ENCODE measurements at regions of chr11 and their contacts with region 1.

Region 1: GRCh38 chr11:62383822-62384221 is 35.0 kb upstream of the SCGB1A1 start:
- DNase-seq: no peak
- ATAC-seq: no peak
- H3K4me3 ChIP-seq: no peak overlapping the region
- H3K4me3 Mint-ChIP-seq: no peak overlapping the region
- H3K27ac ChIP-seq: no peak overlapping the region
- H3K27ac Mint-ChIP-seq: no peak overlapping the region
- H3K4me1 ChIP-seq: peaks cover 0 to 6% of the 10 kb centered on the region in 2 donors
- H3K4me1 Mint-ChIP-seq: peaks cover 0 to 28% (median 4%) of the 10 kb centered on the region in 7 donors
- H3K27me3 ChIP-seq: no peaks in the 10 kb centered on the region
- H3K27me3 Mint-ChIP-seq: peaks cover 0 to 15% (median 0%) of the 10 kb centered on the region in 5 donors

Region 2: GRCh38 chr11:62169091-62169847 is 214.6 kb before region 1 on chr11:
- CTCF ChIA-PET with region 1: no interaction called
- POLR2A ChIA-PET with region 1: no interaction called
- intact Hi-C with region 1: loop called in 1 of 2 experiments (anchors 1 kb)
- DNase-seq: no peak
- ATAC-seq: no peak
- H3K4me3 ChIP-seq: no peak overlapping the region
- H3K4me3 Mint-ChIP-seq: no peak overlapping the region
- H3K27ac ChIP-seq: no peak overlapping the region
- H3K27ac Mint-ChIP-seq: no peak overlapping the region
- H3K4me1 ChIP-seq: peaks cover 0 to 4% of the 10 kb centered on the region in 2 donors
- H3K4me1 Mint-ChIP-seq: peaks cover 0 to 5% (median 5%) of the 10 kb centered on the region in 7 donors
- H3K27me3 ChIP-seq: no peaks in the 10 kb centered on the region
- H3K27me3 Mint-ChIP-seq: peaks cover 30 to 40% (median 34%) of the 10 kb centered on the region in 5 donors

Region 3: DNA sequence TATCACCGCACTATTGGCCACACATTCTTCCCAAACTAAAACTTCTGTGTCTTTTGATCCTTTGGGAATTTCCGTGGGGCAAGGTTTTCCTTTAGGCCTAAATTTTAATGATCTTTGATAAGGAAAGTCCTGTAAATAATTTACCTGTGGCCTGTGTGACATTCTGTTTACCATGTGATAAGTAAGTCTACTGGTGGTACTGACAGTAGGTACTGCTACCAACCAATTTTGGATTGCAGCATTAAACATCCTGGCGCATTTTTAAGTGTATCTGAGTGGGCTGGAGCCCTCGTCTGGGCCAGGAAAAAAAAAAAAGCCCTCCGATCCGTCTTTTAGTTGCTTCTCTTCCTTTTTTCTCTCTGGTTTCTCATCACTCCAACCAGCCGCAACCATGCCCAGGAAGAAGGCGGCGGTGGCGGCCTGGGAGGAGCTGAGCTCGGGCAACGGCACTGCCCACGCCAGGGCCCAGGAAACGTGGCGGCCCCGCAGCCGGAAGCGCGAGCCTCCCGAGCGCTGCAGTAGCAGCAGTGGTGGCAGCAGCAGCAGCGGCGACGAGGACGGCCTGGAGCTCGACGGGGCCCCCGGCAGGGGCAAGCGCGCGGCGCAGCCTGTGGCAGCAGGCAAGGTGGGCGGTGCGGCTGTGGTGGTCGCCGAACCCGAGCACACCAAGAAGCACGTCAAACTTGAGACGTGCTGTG is 12.9 kb before region 1 on chr11:
- CTCF ChIA-PET with region 1: interaction called, 3 read pairs
- POLR2A ChIA-PET with region 1: no interaction called
- intact Hi-C with region 1: loop called in 1 of 2 experiments (anchors 2 kb)
- DNase-seq: peak in 8 of 9 donors; percentile 14 to 59 (median 38)
- ATAC-seq: peak; percentile 87
- H3K4me3 ChIP-seq: no peak overlapping the region
- H3K4me3 Mint-ChIP-seq: peak overlapping the region in 9 of 10 donors; percentile 64 to 82 (median 77)
- H3K27ac ChIP-seq: peak overlapping the region; percentile 54
- H3K27ac Mint-ChIP-seq: peak overlapping the region; percentile 14 to 89 (median 86)
- H3K4me1 ChIP-seq: no peaks in the 10 kb centered on the region
- H3K4me1 Mint-ChIP-seq: peaks cover 0 to 24% (median 6%) of the 10 kb centered on the region in 7 donors
- H3K27me3 ChIP-seq: no peaks in the 10 kb centered on the region
- H3K27me3 Mint-ChIP-seq: no peaks in the 10 kb centered on the region

Region 4: GRCh38 chr11:62394825-62395538 is 11.2 kb after region 1 on chr11:
- CTCF ChIA-PET with region 1: interaction called, 12 read pairs
- POLR2A ChIA-PET with region 1: no interaction called
- intact Hi-C with region 1: loop called (anchors 1 kb)
- DNase-seq: peak in 7 of 9 donors; percentile 37 to 66 (median 54)
- ATAC-seq: peak; percentile 85
- H3K4me3 ChIP-seq: no peak overlapping the region
- H3K4me3 Mint-ChIP-seq: no peak overlapping the region
- H3K27ac ChIP-seq: no peak overlapping the region
- H3K27ac Mint-ChIP-seq: peak overlapping the region in 3 of 9 donors; percentile 23 to 74 (median 65)
- H3K4me1 ChIP-seq: peaks cover 0 to 13% of the 10 kb centered on the region in 2 donors
- H3K4me1 Mint-ChIP-seq: peaks cover 11 to 34% (median 22%) of the 10 kb centered on the region in 7 donors
- H3K27me3 ChIP-seq: no peaks in the 10 kb centered on the region
- H3K27me3 Mint-ChIP-seq: no peaks in the 10 kb centered on the region

Region 5: DNA sequence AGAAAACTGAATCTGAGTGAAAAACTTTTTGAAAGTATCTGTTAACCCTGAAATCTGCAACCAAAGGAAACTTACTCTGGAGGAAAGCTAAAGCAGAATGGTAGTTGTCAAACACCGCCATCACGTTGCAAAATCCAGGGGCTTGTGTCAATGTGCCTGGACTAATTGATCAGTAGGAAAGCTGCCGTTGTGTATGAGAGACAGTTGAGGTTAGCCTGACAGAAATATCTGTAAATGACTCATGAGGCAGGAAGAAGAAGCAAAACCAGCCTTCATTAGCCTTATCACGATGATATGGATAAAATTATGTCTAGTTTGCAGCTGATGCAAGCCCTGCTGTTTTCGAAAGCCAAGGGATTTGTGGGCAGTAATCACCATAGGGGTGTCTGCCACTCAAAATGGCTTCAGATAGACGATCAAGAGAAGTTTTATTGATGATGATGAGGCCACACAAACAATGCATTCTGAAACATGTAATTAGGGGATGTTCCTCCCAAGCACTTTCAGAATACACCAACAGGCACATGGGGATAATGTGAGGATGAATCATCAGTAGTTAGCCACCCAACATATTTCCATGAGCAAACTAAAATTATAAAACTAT is 43.9 kb after region 1 on chr11:
- CTCF ChIA-PET with region 1: interaction called, 14 read pairs
- POLR2A ChIA-PET with region 1: no interaction called
- intact Hi-C with region 1: loop called in 1 of 2 experiments (anchors 2 kb)
- DNase-seq: peak in 1 of 9 donors; percentile 34
- ATAC-seq: peak; percentile 54
- H3K4me3 ChIP-seq: no peak overlapping the region
- H3K4me3 Mint-ChIP-seq: peak overlapping the region in 3 of 10 donors; percentile 19 to 61 (median 43)
- H3K27ac ChIP-seq: no peak overlapping the region
- H3K27ac Mint-ChIP-seq: peak overlapping the region in 6 of 9 donors; percentile 26 to 91 (median 87)
- H3K4me1 ChIP-seq: peaks cover 19 to 24% of the 10 kb centered on the region in 2 donors
- H3K4me1 Mint-ChIP-seq: peaks cover 24 to 65% (median 32%) of the 10 kb centered on the region in 7 donors
- H3K27me3 ChIP-seq: no peaks in the 10 kb centered on the region
- H3K27me3 Mint-ChIP-seq: peaks cover 0 to 5% (median 0%) of the 10 kb centered on the region in 5 donors

Region 6: GRCh38 chr11:62694455-62695167 is 310.8 kb after region 1 on chr11:
- CTCF ChIA-PET with region 1: no interaction called
- POLR2A ChIA-PET with region 1: no interaction called
- intact Hi-C with region 1: loop called in 1 of 2 experiments (anchors 5 kb)
- DNase-seq: peak; percentile 50 to 80 (median 70)
- ATAC-seq: peak; percentile 93
- H3K4me3 ChIP-seq: no peak overlapping the region
- H3K4me3 Mint-ChIP-seq: peak overlapping the region in 1 of 10 donors; percentile 14
- H3K27ac ChIP-seq: no peak overlapping the region
- H3K27ac Mint-ChIP-seq: peak overlapping the region in 5 of 9 donors; percentile 1 to 78 (median 18)
- H3K4me1 ChIP-seq: peaks cover 0 to 6% of the 10 kb centered on the region in 2 donors
- H3K4me1 Mint-ChIP-seq: peaks cover 0 to 8% (median 6%) of the 10 kb centered on the region in 7 donors
- H3K27me3 ChIP-seq: no peaks in the 10 kb centered on the region
- H3K27me3 Mint-ChIP-seq: no peaks in the 10 kb centered on the region

Region 7: GRCh38 chr11:63023841-63024648 is 640.2 kb after region 1 on chr11:
- CTCF ChIA-PET with region 1: no interaction called
- POLR2A ChIA-PET with region 1: no interaction called
- intact Hi-C with region 1: loop called in 1 of 2 experiments (anchors 1 kb)
- DNase-seq: peak; percentile 51 to 86 (median 72)
- ATAC-seq: peak; percentile 98
- H3K4me3 ChIP-seq: no peak overlapping the region
- H3K4me3 Mint-ChIP-seq: peak overlapping the region in 1 of 10 donors; percentile 12
- H3K27ac ChIP-seq: no peak overlapping the region
- H3K27ac Mint-ChIP-seq: no peak overlapping the region
- H3K4me1 ChIP-seq: no peaks in the 10 kb centered on the region
- H3K4me1 Mint-ChIP-seq: peaks cover 0 to 6% (median 4%) of the 10 kb centered on the region in 7 donors
- H3K27me3 ChIP-seq: no peaks in the 10 kb centered on the region
- H3K27me3 Mint-ChIP-seq: peaks cover 5 to 28% (median 19%) of the 10 kb centered on the region in 5 donors